ENCODE measurements at regions of chr2 and their contacts with region 1.

Region 1: DNA sequence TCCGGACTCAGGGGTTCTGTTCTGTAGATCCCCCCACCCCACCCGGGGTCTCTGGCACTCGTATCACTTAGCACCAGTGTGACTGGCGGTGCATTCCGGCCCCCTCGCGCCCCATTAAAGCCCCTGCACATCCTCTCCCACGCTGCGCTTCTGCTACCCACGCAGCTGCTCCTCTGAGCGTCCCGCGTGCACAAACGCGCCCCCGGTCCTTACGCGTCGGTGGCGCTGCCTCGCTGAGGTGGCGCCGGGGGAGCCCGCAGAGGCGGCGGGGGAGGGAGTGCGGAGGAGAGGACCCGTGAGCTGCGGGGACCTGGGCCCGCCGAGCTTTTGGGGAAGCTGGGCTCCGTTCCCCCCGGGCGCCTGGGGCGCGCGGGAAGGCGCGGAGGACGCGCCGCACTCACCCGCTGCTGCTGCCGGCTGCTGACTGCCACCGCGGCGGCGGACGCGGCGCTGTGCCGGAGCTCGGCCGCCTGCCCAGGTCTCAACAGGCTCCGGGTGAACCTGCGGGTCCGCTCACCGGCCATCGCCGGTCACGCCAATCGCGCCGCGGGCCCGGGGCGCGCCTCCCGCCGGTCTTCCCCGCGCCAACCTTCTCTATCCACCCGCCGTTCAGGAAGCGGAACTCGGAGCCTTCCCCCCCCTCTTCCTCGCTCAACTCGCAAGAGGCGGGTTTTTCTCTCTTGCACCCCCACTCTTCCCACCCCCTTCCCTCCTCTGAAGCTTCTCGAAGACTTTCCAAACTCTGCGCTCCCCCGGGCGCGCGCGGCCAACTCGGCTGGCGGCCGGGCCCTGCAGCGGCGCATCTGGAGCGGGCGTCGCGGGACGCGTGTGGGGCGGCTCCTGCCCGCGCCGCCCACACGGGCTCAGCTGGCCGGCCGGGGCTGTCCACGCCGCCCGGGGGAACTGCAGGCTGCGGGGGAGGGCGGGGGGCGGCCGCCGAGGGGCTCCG is at the start of gene DOCK10:
- DNase-seq: no peak
- H3K4me3 ChIP-seq: peak within 1 kb of the TSS; percentile 79
- CTCF ChIP-seq: no peak

Region 2: GRCh38 chr2:225100856-225101294 is 58.8 kb after region 1 on chr2:
- CTCF ChIA-PET with region 1: no interaction called
- POLR2A ChIA-PET with region 1: interaction called, 11 read pairs
- DNase-seq: peak; percentile 90
- H3K4me3 ChIP-seq: no peak overlapping the region
- CTCF ChIP-seq: no peak